Dendritic cell treated with granulocyte-macrophage colony-stimulating factor and Interleukin-4, amounts not matched to agents 40 ng/mL and 50 ng/mL, for 4 days (primary cell): ENCODE measurements at regions of chr6 and their contacts with region 1.

Region 1: GRCh38 chr6:41182069-41183034 is 18.6 kb downstream of the TREML2 start:
- H3K4me3 Mint-ChIP-seq: no peak overlapping the region
- H3K27ac Mint-ChIP-seq: peak overlapping the region; percentile 92
- H3K4me1 Mint-ChIP-seq: peaks cover 56% of the 10 kb centered on the region
- H3K27me3 Mint-ChIP-seq: peaks cover under 1% of the 10 kb centered on the region

Region 2: GRCh38 chr6:41092421-41093140 is 89.8 kb before region 1 on chr6:
- intact Hi-C with region 1: loop called (anchors 2 kb)
- H3K4me3 Mint-ChIP-seq: no peak overlapping the region
- H3K27ac Mint-ChIP-seq: no peak overlapping the region
- H3K4me1 Mint-ChIP-seq: no peaks in the 10 kb centered on the region
- H3K27me3 Mint-ChIP-seq: no peaks in the 10 kb centered on the region